ENCODE measurements at regions of chr13 and their contacts with region 1.

Region 1: GRCh38 chr13:100738176-100738855 is 63.7 kb upstream of the TMTC4 start:
- ATAC-seq: no peak
- H3K4me3 ChIP-seq: no peak overlapping the region
- H3K27ac ChIP-seq: no peak overlapping the region
- H3K4me1 ChIP-seq: no peaks in the 10 kb centered on the region

Region 2: DNA sequence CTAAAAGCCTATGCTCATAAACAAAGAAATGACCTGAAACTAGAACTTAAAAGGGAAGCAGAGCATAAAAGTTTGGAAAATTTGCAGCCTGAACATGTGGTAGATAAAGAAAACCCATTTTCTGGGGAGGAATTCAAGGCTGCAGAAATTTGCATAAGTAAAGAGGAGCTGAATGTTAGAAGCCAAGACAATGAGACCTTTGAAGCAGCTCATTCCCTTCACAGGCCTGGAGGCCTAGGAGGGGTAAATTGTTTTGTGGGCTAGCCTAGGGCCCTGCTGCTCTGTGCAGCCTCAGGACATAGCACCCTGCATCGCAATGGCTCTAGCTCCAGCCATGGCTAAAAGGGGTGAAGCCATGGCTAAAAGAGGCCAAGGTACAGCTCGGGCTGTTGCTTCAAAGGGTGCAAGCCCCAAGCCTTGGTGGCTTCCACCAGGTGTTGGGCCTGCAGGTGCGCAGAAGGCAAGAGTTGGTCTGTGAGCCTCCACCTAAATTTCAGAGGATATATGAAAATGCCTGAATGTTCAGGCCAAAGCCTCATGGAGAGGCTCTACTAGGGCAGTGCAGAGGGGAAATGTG is 718.4 kb before region 1 on chr13:
- in situ Hi-C with region 1: no loop called
- ATAC-seq: no peak
- H3K4me3 ChIP-seq: no peak overlapping the region
- H3K27ac ChIP-seq: no peak overlapping the region
- H3K4me1 ChIP-seq: no peaks in the 10 kb centered on the region

Region 3: DNA sequence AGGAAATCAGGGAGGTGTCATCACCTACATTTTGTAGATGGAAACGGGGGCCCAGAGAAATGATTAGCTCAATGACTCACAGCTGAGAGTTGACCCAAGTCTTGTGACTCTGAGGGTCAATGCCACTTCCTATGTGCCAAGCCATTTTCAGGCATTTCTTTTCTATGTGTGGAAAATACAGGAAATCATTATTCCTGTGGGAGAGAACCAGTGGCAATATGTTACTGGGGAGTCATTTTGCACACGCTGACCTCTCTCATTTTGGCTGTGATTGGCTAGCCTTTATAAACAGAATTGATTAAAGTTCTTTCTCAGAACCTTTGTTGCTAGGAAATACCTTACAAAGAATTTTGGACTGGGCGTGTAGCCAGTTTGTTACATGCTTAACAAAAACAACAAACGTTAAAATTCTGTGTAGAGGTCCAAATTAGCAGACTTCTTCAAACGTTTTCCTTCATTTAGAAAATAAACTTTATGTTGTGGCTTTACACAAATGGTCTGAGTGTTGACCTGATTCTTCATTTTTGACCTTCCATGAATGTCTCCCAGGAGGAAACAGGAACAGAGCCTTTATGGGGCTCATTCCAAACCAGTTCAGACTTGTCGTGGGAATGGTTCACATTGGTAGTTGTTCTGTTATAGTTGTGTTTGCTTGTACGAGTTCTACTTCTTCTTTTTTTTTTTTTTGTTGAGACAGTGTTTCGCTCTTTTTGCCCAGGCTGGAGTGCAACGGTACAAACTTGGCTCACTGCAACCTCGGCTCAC is 638.0 kb before region 1 on chr13:
- in situ Hi-C with region 1: no loop called
- ATAC-seq: peak in 5 of 8 experiments; percentile 67 to 80 (median 71)
- H3K4me3 ChIP-seq: no peak overlapping the region
- H3K27ac ChIP-seq: peak overlapping the region; percentile 51 to 73
- H3K4me1 ChIP-seq: peaks cover 24 to 25% of the 10 kb centered on the region in 2 donors

Region 4: GRCh38 chr13:100530671-100531213 is 207.6 kb before region 1 on chr13:
- in situ Hi-C with region 1: no loop called
- ATAC-seq: peak in 5 of 8 experiments; percentile 75 to 88 (median 84)
- H3K4me3 ChIP-seq: no peak overlapping the region
- H3K27ac ChIP-seq: no peak overlapping the region
- H3K4me1 ChIP-seq: peaks cover 0 to 25% of the 10 kb centered on the region in 2 donors

Region 5: DNA sequence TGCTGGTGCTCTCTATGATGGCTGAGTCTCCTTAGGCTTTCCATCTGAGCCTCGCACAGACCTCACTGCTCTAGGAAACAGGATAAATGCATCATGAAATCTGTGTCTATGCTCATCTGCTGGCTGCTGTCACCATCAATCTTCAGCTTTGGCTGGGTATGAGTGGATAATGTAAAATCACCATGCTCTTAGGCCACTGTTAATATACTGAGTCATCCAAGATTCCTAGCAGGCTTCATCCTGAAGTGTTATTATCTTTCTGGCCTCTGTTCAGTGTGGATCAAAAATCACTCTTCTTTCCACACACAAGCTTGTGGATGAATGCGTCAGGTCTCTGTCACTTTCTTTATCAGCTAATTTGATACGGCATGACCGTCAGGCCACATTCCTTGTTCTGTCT is 360.6 kb after region 1 on chr13:
- in situ Hi-C with region 1: loop called in 1 of 9 experiments (anchors 25 kb)
- ATAC-seq: peak in 5 of 8 experiments; percentile 95 to 98 (median 97)
- H3K4me3 ChIP-seq: no peak overlapping the region
- H3K27ac ChIP-seq: no peak overlapping the region
- H3K4me1 ChIP-seq: peaks cover 0 to 3% of the 10 kb centered on the region in 2 donors

Measured in motor neuron (in vitro differentiated cells).